ENCODE measurements at regions of chr4 and their contacts with region 1.

Region 1: GRCh38 chr4:121252224-121252806 is 88.2 kb upstream of the TNIP3 start:
- DNase-seq: peak in 8 of 9 donors; percentile 26 to 49 (median 44)
- ATAC-seq: peak; percentile 45
- H3K4me3 ChIP-seq: no peak overlapping the region
- H3K4me3 Mint-ChIP-seq: no peak overlapping the region
- H3K27ac ChIP-seq: no peak overlapping the region
- H3K27ac Mint-ChIP-seq: peak overlapping the region in 2 of 9 donors; percentile 6 to 58
- H3K4me1 ChIP-seq: peaks cover 14 to 49% of the 10 kb centered on the region in 2 donors
- H3K4me1 Mint-ChIP-seq: peaks cover 12 to 65% (median 61%) of the 10 kb centered on the region in 7 donors
- H3K27me3 ChIP-seq: no peaks in the 10 kb centered on the region
- H3K27me3 Mint-ChIP-seq: no peaks in the 10 kb centered on the region

Region 2: GRCh38 chr4:120718979-120719566 is 533.2 kb before region 1 on chr4:
- CTCF ChIA-PET with region 1: no interaction called
- POLR2A ChIA-PET with region 1: no interaction called
- intact Hi-C with region 1: loop called in 1 of 2 experiments (anchors 2 kb)
- DNase-seq: peak in 6 of 9 donors; percentile 6 to 40 (median 36)
- ATAC-seq: peak; percentile 82
- H3K4me3 ChIP-seq: no peak overlapping the region
- H3K4me3 Mint-ChIP-seq: no peak overlapping the region
- H3K27ac ChIP-seq: no peak overlapping the region
- H3K27ac Mint-ChIP-seq: no peak overlapping the region
- H3K4me1 ChIP-seq: no peaks in the 10 kb centered on the region
- H3K4me1 Mint-ChIP-seq: peaks cover 0 to 2% (median 0%) of the 10 kb centered on the region in 7 donors
- H3K27me3 ChIP-seq: no peaks in the 10 kb centered on the region
- H3K27me3 Mint-ChIP-seq: peaks cover 0 to 16% (median 0%) of the 10 kb centered on the region in 5 donors

Region 3: GRCh38 chr4:121096629-121097028 is 155.7 kb before region 1 on chr4:
- CTCF ChIA-PET with region 1: no interaction called
- POLR2A ChIA-PET with region 1: no interaction called
- intact Hi-C with region 1: loop called in 1 of 2 experiments (anchors 1 kb)
- DNase-seq: peak in 5 of 9 donors; percentile 29 to 52 (median 41)
- ATAC-seq: no peak
- H3K4me3 ChIP-seq: no peak overlapping the region
- H3K4me3 Mint-ChIP-seq: no peak overlapping the region
- H3K27ac ChIP-seq: no peak overlapping the region
- H3K27ac Mint-ChIP-seq: no peak overlapping the region
- H3K4me1 ChIP-seq: no peaks in the 10 kb centered on the region
- H3K4me1 Mint-ChIP-seq: peaks cover 0 to 5% (median 0%) of the 10 kb centered on the region in 7 donors
- H3K27me3 ChIP-seq: no peaks in the 10 kb centered on the region
- H3K27me3 Mint-ChIP-seq: peaks cover 0 to 30% (median 0%) of the 10 kb centered on the region in 5 donors

Region 4: GRCh38 chr4:121156822-121157769 is 95.2 kb before region 1 on chr4:
- CTCF ChIA-PET with region 1: no interaction called
- POLR2A ChIA-PET with region 1: interaction called, 4 read pairs
- intact Hi-C with region 1: loop called (anchors 1 kb)
- DNase-seq: peak in 7 of 9 donors; percentile 13 to 37 (median 32)
- ATAC-seq: peak; percentile 44
- H3K4me3 ChIP-seq: peak overlapping the region; percentile 70
- H3K4me3 Mint-ChIP-seq: peak overlapping the region; percentile 88 to 99 (median 94)
- H3K27ac ChIP-seq: peak overlapping the region; percentile 71
- H3K27ac Mint-ChIP-seq: peak overlapping the region; percentile 74 to 99 (median 96)
- H3K4me1 ChIP-seq: peaks cover 36 to 52% of the 10 kb centered on the region in 2 donors
- H3K4me1 Mint-ChIP-seq: peaks cover 25 to 71% (median 64%) of the 10 kb centered on the region in 7 donors
- H3K27me3 ChIP-seq: no peaks in the 10 kb centered on the region
- H3K27me3 Mint-ChIP-seq: peaks cover 0 to 35% (median 0%) of the 10 kb centered on the region in 5 donors

Region 5: DNA sequence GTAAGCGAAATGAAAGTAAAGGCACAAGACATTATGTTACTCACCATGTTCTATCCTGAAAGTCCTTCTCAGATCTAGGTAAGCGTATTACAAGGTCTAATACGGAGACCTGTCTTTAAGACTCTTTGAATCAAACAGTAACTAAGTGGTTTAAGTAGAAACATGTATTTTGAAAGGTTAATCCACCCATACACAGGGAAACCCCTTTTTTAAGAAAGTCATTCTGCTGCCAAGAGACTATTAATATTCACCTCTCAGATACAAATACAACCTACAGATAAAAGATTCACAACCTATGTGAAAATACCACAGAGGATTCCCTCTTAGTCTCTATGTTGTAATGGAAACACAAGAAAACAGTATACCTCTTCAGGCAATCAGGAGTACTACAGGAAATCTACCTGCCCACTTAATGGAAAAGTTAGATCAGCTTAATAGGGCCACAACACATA is 24.9 kb before region 1 on chr4:
- CTCF ChIA-PET with region 1: interaction called, 3 read pairs
- POLR2A ChIA-PET with region 1: no interaction called
- intact Hi-C with region 1: loop called (anchors 2 kb)
- DNase-seq: peak in 3 of 9 donors; percentile 26 to 40 (median 28)
- ATAC-seq: peak; percentile 76
- H3K4me3 ChIP-seq: peak overlapping the region; percentile 34
- H3K4me3 Mint-ChIP-seq: peak overlapping the region in 9 of 10 donors; percentile 52 to 83 (median 69)
- H3K27ac ChIP-seq: peak overlapping the region; percentile 62
- H3K27ac Mint-ChIP-seq: peak overlapping the region; percentile 9 to 91 (median 77)
- H3K4me1 ChIP-seq: peaks cover 7 to 11% of the 10 kb centered on the region in 2 donors
- H3K4me1 Mint-ChIP-seq: peaks cover 12 to 50% (median 30%) of the 10 kb centered on the region in 7 donors
- H3K27me3 ChIP-seq: no peaks in the 10 kb centered on the region
- H3K27me3 Mint-ChIP-seq: no peaks in the 10 kb centered on the region

Region 6: GRCh38 chr4:122588453-122589238 is 1336.3 kb after region 1 on chr4:
- CTCF ChIA-PET with region 1: no interaction called
- POLR2A ChIA-PET with region 1: no interaction called
- intact Hi-C with region 1: no loop called
- DNase-seq: no peak
- ATAC-seq: peak; percentile 30
- H3K4me3 ChIP-seq: no peak overlapping the region
- H3K4me3 Mint-ChIP-seq: no peak overlapping the region
- H3K27ac ChIP-seq: no peak overlapping the region
- H3K27ac Mint-ChIP-seq: no peak overlapping the region
- H3K4me1 ChIP-seq: peaks cover 0 to 4% of the 10 kb centered on the region in 2 donors
- H3K4me1 Mint-ChIP-seq: peaks cover 14 to 30% (median 24%) of the 10 kb centered on the region in 7 donors
- H3K27me3 ChIP-seq: no peaks in the 10 kb centered on the region
- H3K27me3 Mint-ChIP-seq: no peaks in the 10 kb centered on the region